HepG2 (cell line): ENCODE measurements at regions of chr5 and their contacts with region 1.

Region 1: GRCh38 chr5:1763548-1763911 is 36.1 kb downstream of the MRPL36 start:
- DNase-seq: peak; percentile 43
- ATAC-seq: peak; percentile 93
- H3K4me3 ChIP-seq: no peak overlapping the region
- H3K27ac ChIP-seq: no peak overlapping the region
- H3K4me1 ChIP-seq: no peaks in the 10 kb centered on the region
- H3K27me3 ChIP-seq: peaks cover 13 to 77% of the 10 kb centered on the region in 2 experiments
- CTCF ChIP-seq: peak; percentile 78
- EP300 ChIP-seq: no peak
- POLR2A ChIP-seq: no peak
- RAD21 ChIP-seq: peak; percentile 69

Region 2: GRCh38 chr5:1910081-1910760 is 146.7 kb after region 1 on chr5:
- CTCF ChIA-PET with region 1: no interaction called
- POLR2A ChIA-PET with region 1: no interaction called
- in situ Hi-C with region 1: no loop called
- intact Hi-C with region 1: no loop called
- DNase-seq: no peak
- ATAC-seq: no peak
- H3K4me3 ChIP-seq: no peak overlapping the region
- H3K27ac ChIP-seq: no peak overlapping the region
- H3K4me1 ChIP-seq: no peaks in the 10 kb centered on the region
- H3K27me3 ChIP-seq: peaks cover 10 to 54% of the 10 kb centered on the region in 2 experiments
- CTCF ChIP-seq: no peak
- EP300 ChIP-seq: no peak
- POLR2A ChIP-seq: no peak
- RAD21 ChIP-seq: no peak

Region 3: GRCh38 chr5:2017540-2018389 is 254.2 kb after region 1 on chr5:
- CTCF ChIA-PET with region 1: interaction called, 5 read pairs
- POLR2A ChIA-PET with region 1: no interaction called
- in situ Hi-C with region 1: loop called (anchors 10 kb)
- intact Hi-C with region 1: no loop called
- DNase-seq: peak; percentile 8
- ATAC-seq: no peak
- H3K4me3 ChIP-seq: no peak overlapping the region
- H3K27ac ChIP-seq: no peak overlapping the region
- H3K4me1 ChIP-seq: no peaks in the 10 kb centered on the region
- H3K27me3 ChIP-seq: peaks cover 5 to 34% of the 10 kb centered on the region in 2 experiments; a peak in 4 of 5 replicates
- CTCF ChIP-seq: peak; percentile 52
- EP300 ChIP-seq: no peak
- POLR2A ChIP-seq: no peak
- RAD21 ChIP-seq: no peak

Region 4: DNA sequence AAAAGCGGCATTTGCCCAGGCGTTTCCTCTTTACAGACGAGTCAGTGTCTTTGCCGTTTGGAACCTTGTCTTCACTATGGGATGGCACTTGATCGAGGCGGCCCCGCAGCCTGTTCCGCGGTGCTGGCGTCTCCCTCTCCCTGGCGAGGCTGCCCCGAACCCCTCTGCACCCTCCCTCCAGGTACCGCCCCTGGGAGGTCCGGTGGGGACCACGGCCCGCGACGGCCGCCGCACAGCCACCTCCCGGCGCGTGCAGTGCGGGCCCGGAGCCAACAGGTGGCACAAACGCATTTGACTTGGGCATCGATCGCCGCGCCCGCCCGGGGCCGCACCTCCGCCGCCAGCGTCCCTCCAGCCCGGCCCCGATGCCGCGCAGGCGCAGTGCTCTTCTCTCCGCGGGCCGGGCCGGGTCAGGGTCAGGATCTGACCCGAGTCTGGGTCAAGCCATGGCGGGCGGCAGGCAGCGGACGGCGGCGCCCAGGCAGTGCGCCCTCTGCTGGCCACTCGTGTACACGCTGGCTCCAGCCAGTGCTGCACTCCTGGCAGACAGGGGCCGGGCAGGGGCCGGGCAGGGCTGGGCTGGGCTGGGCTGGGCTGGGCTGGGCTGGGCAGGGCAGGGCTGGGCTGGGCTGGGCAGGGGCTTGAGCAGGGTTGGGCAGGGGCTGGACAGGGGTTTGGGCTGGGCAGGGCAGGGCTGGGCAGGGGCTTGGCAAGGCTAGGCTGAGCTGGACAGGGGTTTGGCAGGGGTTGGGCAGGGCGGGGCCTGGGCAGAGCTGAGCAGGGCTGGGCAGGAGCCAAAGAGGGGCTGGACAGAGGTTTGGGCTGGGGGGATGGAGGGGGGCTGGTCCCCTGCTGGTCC is 275.0 kb after region 1 on chr5:
- CTCF ChIA-PET with region 1: interaction called, 9 read pairs
- POLR2A ChIA-PET with region 1: no interaction called
- in situ Hi-C with region 1: no loop called
- intact Hi-C with region 1: loop called (anchors 1 kb)
- DNase-seq: peak; percentile 45
- ATAC-seq: peak; percentile 99
- H3K4me3 ChIP-seq: no peak overlapping the region
- H3K27ac ChIP-seq: no peak overlapping the region
- H3K4me1 ChIP-seq: no peaks in the 10 kb centered on the region
- H3K27me3 ChIP-seq: peaks cover 4 to 28% of the 10 kb centered on the region in 2 experiments; a peak in 4 of 5 replicates
- CTCF ChIP-seq: peak; percentile 83
- EP300 ChIP-seq: no peak
- POLR2A ChIP-seq: no peak
- RAD21 ChIP-seq: peak; percentile 86

Region 5: DNA sequence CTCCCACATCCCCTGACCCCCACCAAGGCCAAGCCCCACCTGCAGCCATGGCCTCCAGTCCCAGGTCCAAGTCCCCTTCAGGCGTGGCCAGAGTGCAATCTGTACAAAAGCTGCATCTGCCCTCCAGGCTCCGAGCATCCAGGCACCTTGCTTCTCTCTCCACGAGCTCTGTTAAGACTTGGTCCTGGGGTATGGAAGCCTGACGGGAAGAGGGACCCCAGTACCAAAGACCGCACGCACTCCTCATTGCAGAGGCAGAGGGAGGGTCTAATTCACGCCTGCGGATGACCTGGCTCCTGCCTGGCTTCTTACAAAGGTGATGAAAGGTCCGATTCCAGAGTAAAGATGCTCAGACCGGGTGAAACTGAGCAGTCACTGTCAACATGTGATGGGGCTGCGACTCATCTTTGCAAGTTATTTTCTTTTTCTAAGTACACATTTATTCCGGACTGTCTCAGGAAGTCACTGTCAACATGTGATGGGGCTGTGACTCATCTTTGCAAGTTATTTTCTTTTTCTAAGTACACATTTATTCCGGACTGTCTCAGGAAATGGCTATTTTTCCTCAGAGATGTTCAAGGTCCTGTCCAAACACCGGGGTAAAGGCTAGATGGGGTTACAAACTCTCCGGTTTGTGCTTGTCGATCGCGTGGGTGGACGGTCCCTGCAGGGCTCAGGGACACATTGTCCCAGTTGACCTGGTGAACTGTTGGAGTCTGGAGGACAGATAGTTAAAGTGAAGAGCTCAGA is 371.2 kb after region 1 on chr5:
- CTCF ChIA-PET with region 1: no interaction called
- POLR2A ChIA-PET with region 1: no interaction called
- in situ Hi-C with region 1: no loop called
- intact Hi-C with region 1: no loop called
- DNase-seq: peak; percentile 42
- ATAC-seq: peak; percentile 57
- H3K4me3 ChIP-seq: no peak overlapping the region
- H3K27ac ChIP-seq: no peak overlapping the region
- H3K4me1 ChIP-seq: peaks cover 30% of the 10 kb centered on the region
- H3K27me3 ChIP-seq: peaks cover 3 to 65% of the 10 kb centered on the region in 2 experiments; a peak in 3 of 5 replicates
- CTCF ChIP-seq: no peak
- EP300 ChIP-seq: no peak
- POLR2A ChIP-seq: no peak
- RAD21 ChIP-seq: no peak

Region 6: GRCh38 chr5:2154715-2155114 is 391.2 kb after region 1 on chr5:
- CTCF ChIA-PET with region 1: interaction called, 4 read pairs
- POLR2A ChIA-PET with region 1: no interaction called
- in situ Hi-C with region 1: no loop called
- intact Hi-C with region 1: loop called (anchors 5 kb)
- DNase-seq: no peak
- ATAC-seq: no peak
- H3K4me3 ChIP-seq: no peak overlapping the region
- H3K27ac ChIP-seq: no peak overlapping the region
- H3K4me1 ChIP-seq: no peaks in the 10 kb centered on the region
- H3K27me3 ChIP-seq: peaks cover 3% of the 10 kb centered on the region in 2 experiments; a peak in 2 of 5 replicates
- CTCF ChIP-seq: no peak
- EP300 ChIP-seq: no peak
- POLR2A ChIP-seq: no peak
- RAD21 ChIP-seq: no peak